Activated T-helper 1 cell treated with anti-CD3 and anti-CD28 coated beads, Interleukin-12 subunit alpha, Interleukin-12 subunit beta, Interleukin-2, Interleukin-4 antibody, amounts not matched to agents 30 ng/mL and 10 ng/mL and 1 ng/mL, durations not matched to agents 14 hours and 24 hours and 36 hours (primary cell): ENCODE measurements at regions of chr13 and their contacts with region 1.

Region 1: DNA sequence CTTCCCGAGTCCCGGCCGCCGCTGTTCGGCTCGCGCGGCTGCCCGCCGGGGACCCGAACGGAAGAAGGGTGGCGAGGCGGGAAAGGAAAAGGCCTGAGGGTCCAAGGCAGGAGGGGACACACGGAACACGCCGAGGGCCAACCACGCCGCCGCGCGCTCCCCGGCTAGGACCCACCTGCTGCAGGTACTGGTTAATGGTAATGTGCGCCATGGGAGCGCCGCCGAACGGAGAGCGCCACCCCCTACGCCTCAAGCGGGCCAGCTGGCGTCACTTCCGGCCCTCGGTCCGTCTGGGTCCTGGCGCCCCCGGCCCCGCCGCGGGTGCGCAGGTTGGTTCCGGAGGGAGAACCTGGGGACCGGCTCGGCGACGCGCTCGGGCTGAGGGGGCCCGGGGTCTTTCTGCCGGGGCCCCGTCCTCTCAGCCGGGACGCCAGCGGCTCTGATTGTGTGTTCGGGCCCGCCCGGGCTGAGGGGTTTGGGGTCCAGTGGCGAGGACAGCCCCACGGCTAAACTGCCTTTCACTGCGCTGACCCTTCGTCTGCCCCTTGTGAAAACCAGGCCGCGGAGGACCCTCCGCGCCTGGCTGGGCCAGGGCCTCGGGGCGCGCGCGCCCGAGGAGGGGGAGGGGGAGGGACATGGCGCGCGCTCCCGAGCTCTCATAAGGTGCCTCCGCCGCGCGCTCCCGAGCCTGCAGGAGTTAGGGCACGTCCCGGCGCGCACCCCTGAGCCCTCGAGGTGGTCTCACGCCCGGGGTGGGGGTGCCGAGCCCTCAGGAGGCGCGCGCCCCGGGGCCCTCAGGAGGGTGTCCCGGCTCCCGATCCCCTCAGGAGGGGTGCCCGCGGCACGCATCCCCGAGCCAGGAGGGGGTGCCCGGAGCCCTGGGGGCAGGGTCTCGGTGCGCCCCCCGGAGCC is at the start of gene PCID2:
- DNase-seq: peak; percentile 90
- H3K4me3 Mint-ChIP-seq: peak within 1 kb of the TSS; percentile 94
- H3K27ac Mint-ChIP-seq: peak within 1 kb of the TSS; percentile 46
- H3K4me1 Mint-ChIP-seq: peaks cover 61% of the 10 kb centered on the region
- H3K27me3 Mint-ChIP-seq: no peaks in the 10 kb centered on the region
- total RNA-seq, gene PCID2: 71.5 and 78.9 TPM in 2 replicates

Region 2: DNA sequence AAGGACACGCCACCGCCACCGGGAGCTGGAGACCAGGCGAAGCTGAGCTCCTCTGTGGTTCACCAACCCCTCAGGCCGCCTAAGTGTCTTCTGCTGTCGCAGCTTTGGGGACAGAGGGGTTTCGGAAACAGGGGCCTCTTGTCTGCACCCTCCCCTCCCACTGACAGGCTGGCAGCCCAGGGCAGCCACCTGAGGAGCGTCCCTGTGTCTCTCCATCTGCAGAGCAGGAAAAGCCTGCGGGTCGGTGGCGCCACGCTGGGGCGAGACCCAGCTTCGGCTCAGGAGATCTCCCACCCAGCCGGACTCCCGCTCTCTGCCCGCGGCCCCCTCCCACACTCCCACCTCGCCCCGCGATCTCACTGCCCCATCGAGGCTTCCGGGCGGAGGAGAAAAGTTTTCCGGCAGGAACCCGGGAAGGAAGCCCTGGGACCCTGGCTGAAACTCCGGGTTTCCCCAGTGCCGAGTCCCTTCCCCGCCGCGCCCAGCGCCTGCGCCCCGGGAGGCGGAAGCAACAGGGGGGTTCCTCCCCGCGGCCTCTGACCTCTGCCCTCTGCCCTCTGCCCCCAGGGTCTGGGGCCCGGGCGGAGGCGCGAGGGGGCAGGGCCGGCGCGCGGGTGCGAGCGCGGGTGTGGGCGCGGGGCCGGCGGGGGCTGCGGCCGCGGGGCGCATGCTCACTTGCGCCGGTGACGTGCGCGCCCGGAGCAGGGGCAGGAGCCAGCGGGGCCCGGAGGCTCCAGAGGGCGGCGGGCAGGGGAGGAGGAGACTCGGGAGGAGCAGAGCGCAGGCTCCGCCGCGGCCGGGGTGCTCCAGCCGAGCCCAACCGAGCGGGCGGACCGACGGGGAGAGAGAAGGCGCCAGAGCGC is 519.1 kb before region 1 on chr13 and contains the start of gene ATP11A:
- intact Hi-C with region 1: loop called (anchors 5 kb)
- DNase-seq: peak; percentile 81
- H3K4me3 Mint-ChIP-seq: peak within 1 kb of the TSS; percentile 84
- H3K27ac Mint-ChIP-seq: peak within 1 kb of the TSS; percentile 94
- H3K4me1 Mint-ChIP-seq: peaks cover 59% of the 10 kb centered on the region
- H3K27me3 Mint-ChIP-seq: no peaks in the 10 kb centered on the region
- total RNA-seq, gene ATP11A: 90.4 and 97.8 TPM in 2 replicates

Region 3: DNA sequence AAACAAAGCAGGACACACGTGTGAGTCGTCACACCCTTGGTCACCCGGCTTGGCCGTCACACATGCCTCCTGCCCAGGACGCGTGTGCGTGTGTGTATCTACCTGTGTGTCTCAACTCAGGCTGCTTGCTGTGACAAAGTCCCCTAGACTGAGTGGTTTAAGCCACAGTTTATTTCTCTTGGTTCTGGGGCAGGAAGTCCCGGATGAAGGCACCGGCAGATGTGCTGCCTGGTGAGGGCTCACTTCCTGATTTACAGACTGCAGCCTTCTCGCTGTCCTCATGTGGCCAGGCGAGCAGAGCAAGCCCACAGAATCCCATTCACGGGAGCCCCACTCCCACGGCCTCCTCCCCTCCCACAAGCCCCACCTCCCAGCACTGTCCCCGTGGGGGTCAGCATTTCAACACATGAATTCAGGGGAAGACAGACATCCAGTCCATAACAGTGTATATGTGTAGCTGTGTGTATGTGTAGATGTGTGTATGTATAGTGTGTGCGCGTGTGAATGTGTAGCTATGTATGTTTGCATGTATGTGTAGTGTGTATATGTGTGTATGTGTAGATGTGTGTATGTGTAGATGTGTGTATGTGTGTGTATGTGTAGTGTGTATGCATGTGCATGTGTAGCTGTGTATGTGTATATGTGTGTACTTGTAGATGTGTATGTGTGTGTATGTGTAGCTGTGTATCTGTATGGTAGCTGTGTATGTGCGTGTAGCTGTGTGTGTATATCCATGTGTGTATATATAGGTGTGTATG is 188.2 kb before region 1 on chr13:
- intact Hi-C with region 1: no loop called
- DNase-seq: no peak
- H3K4me3 Mint-ChIP-seq: no peak overlapping the region
- H3K27ac Mint-ChIP-seq: no peak overlapping the region
- H3K4me1 Mint-ChIP-seq: no peaks in the 10 kb centered on the region
- H3K27me3 Mint-ChIP-seq: no peaks in the 10 kb centered on the region

Region 4: GRCh38 chr13:113153810-113154748 is 54.6 kb before region 1 on chr13:
- intact Hi-C with region 1: loop called (anchors 2 kb)
- DNase-seq: peak; percentile 35
- H3K4me3 Mint-ChIP-seq: peak overlapping the region; percentile 61
- H3K27ac Mint-ChIP-seq: peak overlapping the region; percentile 72
- H3K4me1 Mint-ChIP-seq: peaks cover 18% of the 10 kb centered on the region
- H3K27me3 Mint-ChIP-seq: peaks cover 32% of the 10 kb centered on the region

Region 5: GRCh38 chr13:113296842-113297369 is 88.2 kb after region 1 on chr13 and contains the start of gene LAMP1:
- intact Hi-C with region 1: loop called (anchors 1 kb)
- DNase-seq: peak; percentile 98
- H3K4me3 Mint-ChIP-seq: peak within 1 kb of the TSS; percentile 97
- H3K27ac Mint-ChIP-seq: peak within 1 kb of the TSS; percentile 98
- H3K4me1 Mint-ChIP-seq: peaks cover 20% of the 10 kb centered on the region
- H3K27me3 Mint-ChIP-seq: peaks cover 27% of the 10 kb centered on the region
- total RNA-seq, gene LAMP1: 59.4 and 60.3 TPM in 2 replicates

Region 6: DNA sequence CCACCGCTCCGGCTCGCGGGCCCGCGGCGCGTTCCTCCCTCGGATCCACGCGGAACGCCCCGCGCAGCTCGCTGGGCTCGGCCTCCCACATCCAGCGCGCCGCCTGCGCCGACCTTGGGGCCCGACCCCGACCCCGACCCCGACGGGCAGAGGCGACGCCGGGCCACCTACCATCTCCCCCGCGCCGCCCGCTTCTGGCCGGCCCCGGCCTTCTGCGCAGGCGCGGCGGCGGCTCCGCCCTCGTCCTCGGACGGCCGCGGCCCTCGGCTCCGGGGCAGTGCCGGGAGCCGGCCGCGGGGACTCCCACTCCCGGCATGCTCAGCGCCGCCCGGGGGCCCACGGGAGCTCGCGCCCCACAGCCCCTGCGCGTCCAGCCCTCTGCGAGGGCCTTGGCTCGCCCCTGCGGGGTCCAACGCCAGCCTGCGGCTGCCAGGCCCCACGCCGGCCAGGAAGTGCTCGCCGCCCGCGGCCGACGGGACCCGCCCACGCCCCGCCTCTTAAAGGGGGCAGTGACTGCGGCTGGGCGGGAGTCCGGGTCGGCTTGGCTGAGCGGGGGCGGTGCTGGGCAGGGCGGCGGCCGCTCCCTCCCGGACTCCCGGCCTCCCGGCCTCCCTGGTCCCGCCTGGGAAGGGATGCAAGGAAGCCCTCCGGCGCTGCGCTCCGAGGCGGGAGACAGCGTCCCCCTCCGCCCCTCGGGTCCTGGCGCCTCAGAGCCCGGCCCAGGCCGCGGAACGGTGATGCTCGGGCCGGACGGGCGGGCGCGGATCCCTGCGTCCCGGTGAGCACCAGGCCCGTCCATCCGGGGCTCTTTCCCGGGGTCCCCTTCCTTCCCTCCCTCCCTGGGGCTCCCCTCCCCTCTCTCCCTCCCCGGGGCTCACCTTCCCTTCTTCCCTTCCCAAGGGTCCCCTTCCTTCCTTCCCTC is 282.1 kb after region 1 on chr13 and contains the start of gene DCUN1D2:
- intact Hi-C with region 1: loop called (anchors 2 kb)
- DNase-seq: peak; percentile 79
- H3K4me3 Mint-ChIP-seq: peak within 1 kb of the TSS; percentile 90
- H3K27ac Mint-ChIP-seq: peak within 1 kb of the TSS; percentile 78
- H3K4me1 Mint-ChIP-seq: peaks cover 62% of the 10 kb centered on the region
- H3K27me3 Mint-ChIP-seq: peaks cover 3% of the 10 kb centered on the region
- total RNA-seq, gene DCUN1D2: 28.7 and 31.2 TPM in 2 replicates